ENCODE measurements at regions of chr2 and their contacts with region 1.

Region 1: DNA sequence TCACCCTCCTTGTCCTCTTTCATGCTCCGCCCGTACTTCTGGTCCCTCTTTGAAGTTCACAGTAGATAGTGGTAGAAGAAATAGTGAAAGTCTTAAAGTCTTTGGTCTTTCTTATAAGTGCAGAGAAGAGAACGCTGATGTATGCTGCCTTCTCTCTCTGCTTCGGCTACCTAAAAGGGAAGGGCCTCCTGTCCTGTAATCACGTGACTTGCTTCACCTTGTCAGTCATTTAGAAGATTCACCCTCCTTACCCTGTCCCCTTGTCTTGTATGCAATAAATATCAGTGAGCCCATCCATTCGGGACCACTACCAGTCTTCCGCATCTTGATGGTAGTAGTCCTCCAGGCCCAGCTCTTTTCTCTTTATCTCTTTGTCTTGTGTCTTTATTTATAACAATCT is 144.6 kb downstream of the ARL4C start:
- DNase-seq: no peak
- ATAC-seq: no peak
- H3K4me3 ChIP-seq: no peak overlapping the region
- H3K27ac ChIP-seq: no peak overlapping the region
- H3K4me1 ChIP-seq: no peaks in the 10 kb centered on the region
- H3K27me3 ChIP-seq: no peaks in the 10 kb centered on the region
- CTCF ChIP-seq: no peak

Region 2: GRCh38 chr2:234335661-234336228 is 16.5 kb before region 1 on chr2:
- intact Hi-C with region 1: loop called in 1 of 2 experiments (anchors 1 kb)
- DNase-seq: peak; percentile 75 to 86
- ATAC-seq: peak; percentile 46 to 93 (median 87)
- H3K4me3 ChIP-seq: no peak overlapping the region
- H3K27ac ChIP-seq: no peak overlapping the region
- H3K4me1 ChIP-seq: no peaks in the 10 kb centered on the region
- H3K27me3 ChIP-seq: peaks cover 0 to 4% (median 0%) of the 10 kb centered on the region in 3 donors
- CTCF ChIP-seq: no peak

Measured in psoas muscle (tissue), 8 donors.